BJ (cell line): ENCODE measurements at regions of chr10 and their contacts with region 1.

Region 1: GRCh38 chr10:74244097-74244685 is 93.2 kb downstream of the ADK start:
- DNase-seq: no peak
- H3K4me3 ChIP-seq: no peak overlapping the region
- H3K27me3 ChIP-seq: no peaks in the 10 kb centered on the region
- CTCF ChIP-seq: peak; percentile 39

Region 2: DNA sequence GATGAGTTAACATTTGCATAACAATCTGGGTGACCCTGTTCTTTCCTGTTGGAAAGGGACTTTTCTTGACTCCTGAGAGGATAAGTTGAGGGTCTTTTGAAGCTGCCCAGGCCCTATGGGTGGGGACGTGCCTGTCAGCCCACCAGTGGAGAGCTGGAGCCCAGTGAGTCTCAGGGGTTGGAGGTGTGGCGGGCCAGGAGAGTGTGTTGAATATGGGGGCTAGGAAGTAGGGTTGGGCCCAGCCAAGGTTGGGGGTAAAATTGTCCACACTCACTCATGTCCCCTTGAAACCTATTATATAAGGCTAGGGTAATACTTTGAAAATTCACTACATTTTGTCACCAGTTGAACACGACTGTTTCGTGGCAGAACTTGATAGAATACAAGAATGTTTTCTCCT is 564.3 kb after region 1 on chr10:
- CTCF ChIA-PET with region 1: no interaction called
- POLR2A ChIA-PET with region 1: interaction called, 22 read pairs
- DNase-seq: no peak
- H3K4me3 ChIP-seq: no peak overlapping the region
- H3K27me3 ChIP-seq: no peaks in the 10 kb centered on the region
- CTCF ChIP-seq: no peak

Region 3: GRCh38 chr10:75091146-75091545 is 847.0 kb after region 1 on chr10:
- CTCF ChIA-PET with region 1: interaction called, 17 read pairs
- POLR2A ChIA-PET with region 1: no interaction called
- DNase-seq: no peak
- H3K4me3 ChIP-seq: no peak overlapping the region
- H3K27me3 ChIP-seq: no peaks in the 10 kb centered on the region
- CTCF ChIP-seq: no peak

Region 4: GRCh38 chr10:75099952-75100763 is 856.0 kb after region 1 on chr10:
- CTCF ChIA-PET with region 1: interaction called, 126 read pairs
- POLR2A ChIA-PET with region 1: no interaction called
- DNase-seq: no peak
- H3K4me3 ChIP-seq: no peak overlapping the region
- H3K27me3 ChIP-seq: no peaks in the 10 kb centered on the region
- CTCF ChIP-seq: peak; percentile 94